B cell (primary cell): ENCODE measurements at regions of chr9 and their contacts with region 1.

Region 1: DNA sequence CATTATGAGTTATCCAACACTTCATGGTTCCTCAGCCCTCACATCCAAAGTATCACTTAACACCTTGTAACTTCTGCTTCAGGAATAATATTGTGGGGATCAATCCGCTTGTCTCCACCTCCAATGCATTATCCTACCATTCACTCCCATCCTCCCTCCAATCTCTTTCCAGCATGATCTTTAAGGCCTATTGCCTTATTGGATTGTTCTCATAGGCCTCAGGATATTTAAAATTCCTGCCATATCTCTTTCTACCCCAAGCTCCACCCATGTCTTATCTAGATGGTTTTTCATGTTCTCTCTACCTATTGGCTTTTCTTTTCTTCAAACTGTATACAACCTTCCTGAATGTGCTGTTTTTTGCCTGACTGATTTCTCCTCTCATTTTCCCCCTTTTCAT is 7.2 kb downstream of the KDM4C start:
- DNase-seq: no peak
- ATAC-seq: no peak
- H3K4me3 ChIP-seq: no peak overlapping the region
- H3K4me3 Mint-ChIP-seq: no peak overlapping the region
- H3K27ac ChIP-seq: peak overlapping the region in 1 of 2 donors; percentile 9
- H3K27ac Mint-ChIP-seq: no peak overlapping the region
- H3K4me1 ChIP-seq: peaks cover 16 to 47% of the 10 kb centered on the region in 2 donors
- H3K4me1 Mint-ChIP-seq: peaks cover 71% of the 10 kb centered on the region
- H3K27me3 ChIP-seq: no peaks in the 10 kb centered on the region
- H3K27me3 Mint-ChIP-seq: no peaks in the 10 kb centered on the region
- CTCF ChIP-seq: no peak

Region 2: DNA sequence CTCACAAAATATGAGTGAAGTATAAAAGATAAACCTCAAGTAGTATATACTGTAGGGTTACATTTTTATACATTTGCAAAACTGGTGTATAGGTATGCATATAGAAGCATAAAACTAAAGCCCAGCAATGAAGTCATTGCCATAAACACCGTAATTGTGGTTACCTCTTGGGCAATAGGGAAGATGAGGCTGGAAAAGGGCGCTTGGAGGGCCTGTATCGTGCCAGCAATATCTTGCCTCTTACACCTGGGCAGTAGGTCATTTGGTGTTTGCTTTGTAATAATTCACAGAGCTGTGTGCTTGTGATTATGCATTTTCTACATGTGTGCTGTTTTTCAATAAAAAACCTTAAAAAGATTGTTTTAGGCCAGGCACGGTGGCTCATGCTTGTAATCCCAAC is 38.0 kb after region 1 on chr9:
- CTCF ChIA-PET with region 1: no interaction called
- POLR2A ChIA-PET with region 1: interaction called, 10 read pairs
- intact Hi-C with region 1: no loop called
- DNase-seq: no peak
- ATAC-seq: no peak
- H3K4me3 ChIP-seq: no peak overlapping the region
- H3K4me3 Mint-ChIP-seq: no peak overlapping the region
- H3K27ac ChIP-seq: no peak overlapping the region
- H3K27ac Mint-ChIP-seq: no peak overlapping the region
- H3K4me1 ChIP-seq: no peaks in the 10 kb centered on the region
- H3K4me1 Mint-ChIP-seq: no peaks in the 10 kb centered on the region
- H3K27me3 ChIP-seq: no peaks in the 10 kb centered on the region
- H3K27me3 Mint-ChIP-seq: no peaks in the 10 kb centered on the region
- CTCF ChIP-seq: no peak

Region 3: GRCh38 chr9:6818320-6818922 is 53.5 kb after region 1 on chr9:
- CTCF ChIA-PET with region 1: no interaction called
- POLR2A ChIA-PET with region 1: no interaction called
- intact Hi-C with region 1: loop called (anchors 5 kb)
- DNase-seq: no peak
- ATAC-seq: no peak
- H3K4me3 ChIP-seq: no peak overlapping the region
- H3K4me3 Mint-ChIP-seq: no peak overlapping the region
- H3K27ac ChIP-seq: no peak overlapping the region
- H3K27ac Mint-ChIP-seq: no peak overlapping the region
- H3K4me1 ChIP-seq: peaks cover 0 to 11% of the 10 kb centered on the region in 2 donors
- H3K4me1 Mint-ChIP-seq: peaks cover 41% of the 10 kb centered on the region
- H3K27me3 ChIP-seq: no peaks in the 10 kb centered on the region
- H3K27me3 Mint-ChIP-seq: no peaks in the 10 kb centered on the region
- CTCF ChIP-seq: no peak

Region 4: GRCh38 chr9:7081065-7081600 is 316.2 kb after region 1 on chr9:
- CTCF ChIA-PET with region 1: no interaction called
- POLR2A ChIA-PET with region 1: no interaction called
- intact Hi-C with region 1: no loop called
- DNase-seq: no peak
- ATAC-seq: no peak
- H3K4me3 ChIP-seq: no peak overlapping the region
- H3K4me3 Mint-ChIP-seq: no peak overlapping the region
- H3K27ac ChIP-seq: no peak overlapping the region
- H3K27ac Mint-ChIP-seq: no peak overlapping the region
- H3K4me1 ChIP-seq: no peaks in the 10 kb centered on the region
- H3K4me1 Mint-ChIP-seq: no peaks in the 10 kb centered on the region
- H3K27me3 ChIP-seq: no peaks in the 10 kb centered on the region
- H3K27me3 Mint-ChIP-seq: no peaks in the 10 kb centered on the region
- CTCF ChIP-seq: no peak